ENCODE measurements at regions of chr17 and their contacts with region 1.

Region 1: GRCh38 chr17:47895856-47896671 is at the start of gene SP2:
- DNase-seq: peak; percentile 97
- ATAC-seq: peak; percentile 88
- H3K4me3 Mint-ChIP-seq: peak within 1 kb of the TSS; percentile 98
- H3K27ac Mint-ChIP-seq: peak within 1 kb of the TSS; percentile 99
- H3K4me1 Mint-ChIP-seq: peaks cover 44% of the 10 kb centered on the region
- H3K27me3 Mint-ChIP-seq: no peaks in the 10 kb centered on the region
- CTCF ChIP-seq: no peak
- total RNA-seq, gene SP2: 26.5 and 28.5 TPM in 2 replicates

Region 2: DNA sequence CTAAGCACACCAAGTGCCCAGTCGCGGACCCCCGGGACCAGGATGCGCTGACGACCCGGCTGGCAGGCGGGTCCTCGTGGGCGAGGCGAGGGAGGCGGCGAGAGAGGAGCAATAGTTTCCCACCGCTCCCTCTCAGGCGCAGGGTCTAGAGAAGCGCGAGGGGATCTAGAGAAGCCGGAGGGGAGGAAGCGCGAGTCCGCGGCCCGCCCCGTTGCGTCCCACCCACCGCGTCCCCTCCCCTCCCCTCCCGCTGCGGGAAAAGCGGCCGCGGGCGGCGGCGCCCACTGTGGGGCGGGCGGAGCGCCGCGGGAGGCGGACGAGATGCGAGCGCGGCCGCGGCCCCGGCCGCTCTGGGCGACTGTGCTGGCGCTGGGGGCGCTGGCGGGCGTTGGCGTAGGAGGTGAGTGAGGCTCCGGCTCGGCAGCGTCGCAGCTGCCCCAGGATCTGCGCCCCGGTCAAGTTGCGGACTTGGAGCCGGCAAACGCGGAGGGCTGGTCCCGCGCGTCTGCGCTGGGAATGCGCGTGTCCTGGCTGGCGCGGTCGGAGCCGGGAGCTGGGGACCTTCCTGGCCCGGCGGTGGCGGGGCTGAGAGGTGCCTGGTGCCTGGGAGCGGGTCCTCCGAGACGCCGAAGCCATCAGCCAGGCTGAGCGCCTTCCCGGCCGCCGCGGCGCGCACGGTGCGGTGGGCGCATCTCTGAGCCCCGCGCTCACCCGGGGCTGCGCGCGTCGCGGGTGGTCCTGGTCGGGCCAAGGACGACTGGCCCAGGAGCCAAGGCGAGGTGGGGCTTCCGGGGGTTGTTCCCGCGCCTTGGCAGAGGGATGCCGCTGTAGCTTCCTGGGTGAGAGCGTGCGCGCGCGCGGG is 642.3 kb before region 1 on chr17 and contains the start of gene ITGB3:
- CTCF ChIA-PET with region 1: no interaction called
- POLR2A ChIA-PET with region 1: interaction called, 3 read pairs
- intact Hi-C with region 1: loop called (anchors 10 kb)
- DNase-seq: peak; percentile 78
- ATAC-seq: peak; percentile 97
- H3K4me3 Mint-ChIP-seq: peak within 1 kb of the TSS; percentile 91
- H3K27ac Mint-ChIP-seq: peak within 1 kb of the TSS; percentile 74
- H3K4me1 Mint-ChIP-seq: peaks cover 17% of the 10 kb centered on the region
- H3K27me3 Mint-ChIP-seq: no peaks in the 10 kb centered on the region
- CTCF ChIP-seq: no peak
- total RNA-seq, gene ITGB3: 4.1 and 4.7 TPM in 2 replicates

Region 3: DNA sequence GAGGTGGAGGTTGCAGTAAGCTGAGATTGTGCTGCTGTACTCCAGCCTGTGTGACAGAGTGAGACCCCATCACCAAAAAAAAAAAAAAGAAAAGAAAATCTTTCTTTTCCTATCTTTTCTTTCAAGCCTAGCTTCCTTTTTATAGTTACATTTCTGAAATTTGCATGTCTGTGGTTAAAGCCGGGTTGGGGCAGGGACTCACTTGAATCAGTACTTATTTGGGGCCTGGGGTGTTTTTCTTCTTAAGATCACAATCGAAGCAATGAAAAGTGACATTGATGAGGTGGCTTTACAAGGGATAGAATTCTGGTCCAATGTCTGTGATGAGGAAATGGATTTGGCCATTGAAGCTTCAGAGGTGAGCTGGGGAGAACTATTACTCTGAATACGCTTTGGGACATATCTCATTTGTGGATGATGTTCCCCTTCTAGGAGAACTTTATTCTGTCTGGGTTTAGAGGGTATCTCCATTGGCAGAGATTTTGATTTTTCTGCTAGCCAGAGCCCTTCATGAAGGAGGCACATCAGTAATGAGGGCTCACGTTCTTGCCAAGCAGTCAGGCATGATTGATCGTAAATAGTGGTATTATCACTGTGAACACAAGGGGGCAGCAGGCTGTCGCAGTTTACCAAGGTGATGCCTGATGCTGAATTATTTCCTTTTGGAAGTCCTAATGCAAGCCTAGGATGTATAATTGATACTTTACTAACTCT is 232.0 kb before region 1 on chr17:
- CTCF ChIA-PET with region 1: no interaction called
- POLR2A ChIA-PET with region 1: no interaction called
- intact Hi-C with region 1: loop called (anchors 5 kb)
- DNase-seq: no peak
- ATAC-seq: peak; percentile 74
- H3K4me3 Mint-ChIP-seq: peak overlapping the region; percentile 73
- H3K27ac Mint-ChIP-seq: peak overlapping the region; percentile 90
- H3K4me1 Mint-ChIP-seq: peaks cover 36% of the 10 kb centered on the region
- H3K27me3 Mint-ChIP-seq: no peaks in the 10 kb centered on the region
- CTCF ChIP-seq: peak; percentile 70

Region 4: DNA sequence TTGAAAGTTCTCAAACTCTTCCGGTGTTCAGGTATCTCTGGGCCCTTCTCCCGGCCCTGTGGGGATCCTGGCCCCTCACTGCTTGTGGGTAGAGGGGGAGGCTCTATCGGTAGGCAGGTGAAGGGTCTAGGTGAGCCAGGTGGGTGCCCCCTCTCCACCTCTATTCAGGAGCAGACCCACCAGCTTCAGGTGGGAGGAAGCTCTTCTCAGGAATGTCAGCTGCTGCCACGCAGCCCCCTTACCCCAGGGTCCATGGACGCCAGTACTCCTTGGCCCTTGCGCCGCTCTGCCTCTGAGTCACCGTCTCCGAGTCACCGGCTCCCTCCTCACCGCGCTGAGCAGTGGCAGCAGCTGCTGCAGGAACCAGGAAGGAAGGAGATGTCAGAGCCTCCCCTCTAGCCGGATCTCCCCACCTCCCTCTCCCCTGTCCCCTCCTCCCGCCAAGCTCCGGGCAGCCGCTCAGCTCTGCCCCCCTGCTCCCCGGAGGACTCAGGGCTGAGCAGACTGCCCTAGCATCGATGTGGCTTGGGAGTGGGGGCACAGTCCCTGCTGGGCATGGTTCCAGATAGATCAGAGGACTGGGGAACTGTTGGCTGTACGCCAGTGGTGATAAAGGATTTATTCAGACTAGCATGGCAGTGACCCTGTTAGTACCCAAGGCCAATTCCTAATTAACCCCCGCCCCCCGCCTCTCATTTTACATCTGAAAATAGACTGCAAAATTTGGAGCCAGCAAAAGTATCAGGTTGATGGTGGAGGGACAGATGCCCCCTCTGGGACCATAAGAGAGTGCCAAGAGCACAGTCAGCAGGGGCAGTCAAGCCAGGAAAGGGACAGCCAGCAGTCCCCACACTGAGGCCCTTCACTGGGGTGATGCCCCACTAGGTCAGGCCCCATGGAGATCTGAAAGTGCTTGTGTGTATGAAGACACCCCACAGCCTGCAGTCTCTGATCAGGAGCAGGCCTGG is 74.4 kb before region 1 on chr17 and contains the start of gene OSBPL7:
- CTCF ChIA-PET with region 1: no interaction called
- POLR2A ChIA-PET with region 1: interaction called, 12 read pairs
- intact Hi-C with region 1: no loop called
- DNase-seq: peak; percentile 55
- ATAC-seq: peak; percentile 98
- H3K4me3 Mint-ChIP-seq: peak within 1 kb of the TSS; percentile 96
- H3K27ac Mint-ChIP-seq: peak within 1 kb of the TSS; percentile 77
- H3K4me1 Mint-ChIP-seq: peaks cover 26% of the 10 kb centered on the region
- H3K27me3 Mint-ChIP-seq: no peaks in the 10 kb centered on the region
- CTCF ChIP-seq: no peak
- total RNA-seq, gene OSBPL7: 28.8 and 34.4 TPM in 2 replicates

Region 5: GRCh38 chr17:47840740-47841603 is 55.1 kb before region 1 on chr17 and contains the start of gene SCRN2:
- CTCF ChIA-PET with region 1: interaction called, 207 read pairs
- POLR2A ChIA-PET with region 1: interaction called, 50 read pairs
- intact Hi-C with region 1: loop called (anchors 1 kb)
- DNase-seq: peak; percentile 91
- ATAC-seq: peak; percentile 94
- H3K4me3 Mint-ChIP-seq: peak within 1 kb of the TSS; percentile 98
- H3K27ac Mint-ChIP-seq: peak within 1 kb of the TSS; percentile 79
- H3K4me1 Mint-ChIP-seq: peaks cover 23% of the 10 kb centered on the region
- H3K27me3 Mint-ChIP-seq: peaks cover 16% of the 10 kb centered on the region
- CTCF ChIP-seq: peak; percentile 61
- total RNA-seq, gene SCRN2: 32.1 and 36.3 TPM in 2 replicates

Region 6: DNA sequence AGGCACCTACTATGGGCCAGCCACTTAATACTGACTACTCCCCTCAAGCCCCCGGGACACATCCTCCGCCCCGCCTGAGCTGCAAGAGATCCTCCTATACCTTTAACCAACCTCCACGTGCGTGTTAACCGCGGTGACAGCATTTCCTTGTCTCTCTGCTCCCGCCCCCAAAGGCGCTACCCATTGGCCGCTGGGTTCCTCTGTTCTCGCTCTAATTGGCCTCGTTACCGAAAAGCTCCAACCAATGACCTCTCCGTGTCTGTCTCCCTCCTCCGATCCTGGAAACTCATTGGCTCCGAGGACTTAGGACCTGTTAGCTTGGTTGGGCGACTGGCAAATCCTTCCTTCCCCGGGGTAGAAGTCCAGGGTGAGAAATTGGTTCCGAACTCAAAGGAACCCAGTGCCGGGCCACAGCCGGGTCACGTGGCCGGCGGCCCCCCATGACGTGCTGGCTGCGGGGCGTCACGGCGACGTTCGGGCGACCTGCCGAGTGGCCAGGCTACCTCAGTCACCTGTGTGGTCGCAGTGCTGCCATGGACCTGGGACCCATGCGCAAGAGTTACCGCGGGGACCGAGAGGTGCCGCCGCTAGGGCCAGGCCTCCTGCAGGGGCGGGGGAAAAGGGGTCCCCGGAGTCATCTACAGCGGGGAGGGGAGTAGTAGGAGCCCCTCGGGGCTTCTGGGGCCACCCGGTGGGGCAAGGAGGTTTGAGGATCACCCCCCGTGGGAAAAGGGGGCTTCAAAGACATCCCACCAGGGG is 45.4 kb after region 1 on chr17 and contains the start of gene PNPO:
- CTCF ChIA-PET with region 1: no interaction called
- POLR2A ChIA-PET with region 1: interaction called, 32 read pairs
- intact Hi-C with region 1: loop called (anchors 1 kb)
- DNase-seq: peak; percentile 74
- ATAC-seq: peak; percentile 99
- H3K4me3 Mint-ChIP-seq: peak within 1 kb of the TSS; percentile 91
- H3K27ac Mint-ChIP-seq: peak within 1 kb of the TSS; percentile 91
- H3K4me1 Mint-ChIP-seq: peaks cover 41% of the 10 kb centered on the region
- H3K27me3 Mint-ChIP-seq: no peaks in the 10 kb centered on the region
- CTCF ChIP-seq: no peak
- total RNA-seq, gene PNPO: 25.1 and 26.5 TPM in 2 replicates

Region 7: GRCh38 chr17:47970704-47971463 is 74.8 kb after region 1 on chr17 and contains the start of gene CDK5RAP3:
- CTCF ChIA-PET with region 1: interaction called, 6 read pairs
- POLR2A ChIA-PET with region 1: interaction called, 51 read pairs
- intact Hi-C with region 1: loop called (anchors 1 kb)
- DNase-seq: peak; percentile 98
- ATAC-seq: peak; percentile 99
- H3K4me3 Mint-ChIP-seq: peak within 1 kb of the TSS; percentile 97
- H3K27ac Mint-ChIP-seq: peak within 1 kb of the TSS; percentile 91
- H3K4me1 Mint-ChIP-seq: peaks cover 30% of the 10 kb centered on the region
- H3K27me3 Mint-ChIP-seq: no peaks in the 10 kb centered on the region
- CTCF ChIP-seq: peak; percentile 38
- total RNA-seq, gene CDK5RAP3: 275 and 286 TPM in 2 replicates

Region 8: GRCh38 chr17:48259694-48260291 is 363.7 kb after region 1 on chr17:
- CTCF ChIA-PET with region 1: no interaction called
- POLR2A ChIA-PET with region 1: no interaction called
- intact Hi-C with region 1: no loop called
- DNase-seq: no peak
- ATAC-seq: no peak
- H3K4me3 Mint-ChIP-seq: no peak overlapping the region
- H3K27ac Mint-ChIP-seq: no peak overlapping the region
- H3K4me1 Mint-ChIP-seq: no peaks in the 10 kb centered on the region
- H3K27me3 Mint-ChIP-seq: no peaks in the 10 kb centered on the region
- CTCF ChIP-seq: no peak